H1 (cell line): ENCODE measurements at regions of chr11 and their contacts with region 1.

Region 1: DNA sequence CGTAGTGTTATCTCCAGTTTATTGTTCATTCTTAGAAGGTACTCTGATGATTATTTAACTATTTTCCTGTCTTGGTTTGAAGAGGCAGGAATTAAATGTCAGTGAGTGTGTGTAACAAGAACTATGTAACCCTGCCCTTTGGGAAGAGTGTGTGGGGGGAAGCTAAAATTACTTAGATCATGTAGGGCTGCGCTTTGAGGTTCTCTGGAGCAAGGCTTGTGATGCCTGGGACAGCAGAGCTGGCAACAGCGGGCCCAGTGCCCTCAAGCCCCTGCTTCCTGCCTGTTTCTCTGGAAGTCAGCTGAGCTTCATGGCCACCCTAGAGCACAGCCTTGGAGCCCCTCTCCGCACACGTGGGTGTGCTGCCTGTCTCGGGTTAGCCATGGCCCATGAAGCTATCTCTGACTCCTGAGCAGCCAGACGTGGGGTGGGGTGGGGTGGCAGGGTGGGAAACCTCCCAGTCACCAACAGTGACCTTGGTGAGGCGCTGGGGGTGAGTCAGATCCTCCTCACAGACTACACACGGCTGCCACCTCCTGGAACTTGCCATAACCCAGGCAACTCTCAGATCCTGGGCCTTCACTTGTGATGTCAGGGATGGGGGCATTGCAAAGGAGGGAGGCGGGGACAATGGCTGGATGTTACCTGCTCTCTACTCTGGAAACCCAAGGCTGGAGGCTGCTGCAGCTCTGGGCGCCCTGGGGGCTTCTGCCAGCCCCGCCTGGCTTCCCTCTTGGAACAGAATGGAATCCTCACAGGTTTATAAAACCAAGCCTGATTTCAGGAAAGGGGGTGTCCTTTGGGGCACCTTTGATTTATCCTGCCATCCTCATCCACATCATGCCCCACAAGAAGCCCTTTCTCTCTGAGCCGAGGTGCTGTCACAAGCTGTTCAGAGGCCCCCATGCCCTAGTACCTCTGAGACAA is 88.6 kb downstream of the SNX19 start:
- DNase-seq: peak; percentile 66 to 69
- H3K4me3 ChIP-seq: no peak overlapping the region
- H3K27ac ChIP-seq: no peak overlapping the region
- H3K4me1 ChIP-seq: peaks cover 0 to 10% (median 2%) of the 10 kb centered on the region in 4 experiments; a peak in 4 of 7 replicates
- H3K27me3 ChIP-seq: no peaks in the 10 kb centered on the region
- CTCF ChIP-seq: peak; percentile 73 to 85 (median 79)
- EP300 ChIP-seq: no peak
- POLR2A ChIP-seq: no peak
- RAD21 ChIP-seq: peak; percentile 91 to 93

Region 2: DNA sequence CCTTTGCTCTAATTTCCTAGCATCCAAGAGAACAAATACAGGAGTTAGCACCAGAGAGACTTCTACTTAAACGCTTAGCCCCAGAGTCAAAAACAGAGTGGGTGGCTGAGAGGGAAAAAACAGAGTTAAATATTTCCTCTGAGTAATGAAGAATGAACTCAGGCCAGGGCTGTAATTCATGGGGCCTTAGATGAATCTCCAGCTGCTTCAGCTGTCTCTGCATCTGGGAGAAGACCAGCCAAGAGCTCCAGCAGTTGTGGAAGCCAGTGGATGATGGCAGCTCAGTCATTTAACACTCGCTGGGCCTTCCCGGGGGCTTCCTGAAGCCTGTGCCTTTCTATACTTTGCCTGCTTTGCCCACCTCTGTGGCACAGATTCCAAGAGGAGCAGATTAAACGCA is 385.0 kb before region 1 on chr11:
- CTCF ChIA-PET with region 1: interaction called, 13 read pairs
- POLR2A ChIA-PET with region 1: no interaction called
- DNase-seq: no peak
- H3K4me3 ChIP-seq: no peak overlapping the region
- H3K27ac ChIP-seq: no peak overlapping the region
- H3K4me1 ChIP-seq: no peaks in the 10 kb centered on the region
- H3K27me3 ChIP-seq: peaks cover 0 to 12% (median 4%) of the 10 kb centered on the region in 4 experiments; a peak in 4 of 7 replicates
- CTCF ChIP-seq: no peak
- EP300 ChIP-seq: no peak
- POLR2A ChIP-seq: no peak
- RAD21 ChIP-seq: no peak

Region 3: DNA sequence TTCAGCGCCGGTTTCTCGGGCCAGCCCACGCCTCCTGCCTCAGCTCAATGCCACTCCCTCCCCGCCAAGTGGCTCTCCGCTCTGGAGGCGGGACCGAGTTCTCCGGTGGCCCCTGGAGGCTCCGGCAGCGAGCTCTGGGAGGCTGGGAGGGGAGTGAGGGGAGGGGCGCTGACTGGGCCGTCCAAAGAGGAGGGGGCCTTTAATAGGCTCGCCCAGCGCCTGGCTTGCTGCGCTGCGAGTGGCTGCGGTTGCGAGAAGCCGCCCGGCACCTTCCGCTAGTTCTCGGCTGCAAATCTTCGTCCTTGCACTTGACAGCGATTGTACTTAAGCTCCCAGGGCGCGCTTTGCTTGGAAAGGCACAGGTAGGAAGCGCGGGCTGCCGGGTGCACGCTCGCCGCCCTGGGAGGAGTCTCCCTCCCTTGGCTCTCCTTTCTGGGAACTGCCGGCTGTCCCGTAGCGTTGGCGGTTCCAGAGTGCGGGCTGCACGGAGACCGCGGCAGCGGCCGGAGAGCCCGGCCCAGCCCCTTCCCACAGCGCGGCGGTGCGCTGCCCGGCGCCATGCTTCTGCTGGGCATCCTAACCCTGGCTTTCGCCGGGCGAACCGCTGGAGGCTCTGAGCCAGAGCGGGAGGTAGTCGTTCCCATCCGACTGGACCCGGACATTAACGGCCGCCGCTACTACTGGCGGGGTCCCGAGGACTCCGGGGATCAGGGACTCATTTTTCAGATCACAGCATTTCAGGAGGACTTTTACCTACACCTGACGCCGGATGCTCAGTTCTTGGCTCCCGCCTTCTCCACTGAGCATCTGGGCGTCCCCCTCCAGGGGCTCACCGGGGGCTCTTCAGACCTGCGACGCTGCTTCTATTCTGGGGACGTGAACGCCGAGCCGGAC is 379.1 kb before region 1 on chr11 and contains the start of gene ADAMTS15:
- CTCF ChIA-PET with region 1: interaction called, 14 read pairs
- POLR2A ChIA-PET with region 1: no interaction called
- DNase-seq: peak; percentile 80 to 87
- H3K4me3 ChIP-seq: peak within 1 kb of the TSS; percentile 49 to 72 (median 54)
- H3K27ac ChIP-seq: no peak within 1 kb of the TSS
- H3K4me1 ChIP-seq: peaks cover 0 to 9% (median 6%) of the 10 kb centered on the region in 4 experiments; a peak in 6 of 7 replicates
- H3K27me3 ChIP-seq: peaks cover 9 to 63% (median 44%) of the 10 kb centered on the region in 4 experiments
- CTCF ChIP-seq: no peak; a peak in 1 of 4 replicates
- EP300 ChIP-seq: no peak
- POLR2A ChIP-seq: peak in 1 of 2 experiments; percentile 34; a peak in 1 of 3 replicates
- RAD21 ChIP-seq: no peak
- total RNA-seq, gene ADAMTS15: 4.7 and 4.9 TPM in 2 replicates

Region 4: DNA sequence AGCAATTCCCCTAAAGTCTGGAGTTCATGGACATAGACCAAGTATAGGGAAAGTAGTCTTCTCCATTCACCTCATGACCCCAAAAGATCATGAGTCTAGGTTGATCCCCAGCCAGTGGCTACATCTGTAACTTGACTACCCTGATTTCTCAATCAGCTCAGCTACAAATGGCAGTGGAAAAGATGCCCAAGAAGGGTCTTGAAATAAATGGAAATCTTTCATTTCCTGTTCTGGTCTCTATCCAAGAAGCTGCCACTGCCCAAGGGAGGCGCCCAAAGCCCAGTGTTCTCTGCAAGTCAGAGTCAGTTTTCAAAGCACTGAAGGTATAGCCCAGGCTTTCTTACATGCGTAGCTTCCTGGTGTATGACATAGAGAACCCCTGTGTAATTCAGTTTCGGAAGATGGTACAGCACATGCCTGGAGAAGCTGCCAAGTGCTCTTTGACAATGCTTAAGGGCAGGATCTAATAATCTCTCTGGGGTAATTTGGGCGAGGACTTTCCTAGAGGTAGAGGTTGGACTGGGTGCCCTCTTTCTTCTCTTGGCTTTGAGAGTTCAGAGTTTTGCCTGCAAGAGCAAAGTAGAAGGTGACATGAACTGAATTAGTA is 278.2 kb before region 1 on chr11:
- CTCF ChIA-PET with region 1: interaction called, 13 read pairs
- POLR2A ChIA-PET with region 1: no interaction called
- DNase-seq: no peak
- H3K4me3 ChIP-seq: no peak overlapping the region
- H3K27ac ChIP-seq: no peak overlapping the region
- H3K4me1 ChIP-seq: peaks cover 0 to 2% (median 0%) of the 10 kb centered on the region in 4 experiments; a peak in 1 of 7 replicates
- H3K27me3 ChIP-seq: no peaks in the 10 kb centered on the region; a peak in 1 of 7 replicates
- CTCF ChIP-seq: peak in 2 of 3 experiments; percentile 28 to 33; a peak in 2 of 4 replicates
- EP300 ChIP-seq: no peak
- POLR2A ChIP-seq: no peak
- RAD21 ChIP-seq: peak; percentile 50 to 66

Region 5: DNA sequence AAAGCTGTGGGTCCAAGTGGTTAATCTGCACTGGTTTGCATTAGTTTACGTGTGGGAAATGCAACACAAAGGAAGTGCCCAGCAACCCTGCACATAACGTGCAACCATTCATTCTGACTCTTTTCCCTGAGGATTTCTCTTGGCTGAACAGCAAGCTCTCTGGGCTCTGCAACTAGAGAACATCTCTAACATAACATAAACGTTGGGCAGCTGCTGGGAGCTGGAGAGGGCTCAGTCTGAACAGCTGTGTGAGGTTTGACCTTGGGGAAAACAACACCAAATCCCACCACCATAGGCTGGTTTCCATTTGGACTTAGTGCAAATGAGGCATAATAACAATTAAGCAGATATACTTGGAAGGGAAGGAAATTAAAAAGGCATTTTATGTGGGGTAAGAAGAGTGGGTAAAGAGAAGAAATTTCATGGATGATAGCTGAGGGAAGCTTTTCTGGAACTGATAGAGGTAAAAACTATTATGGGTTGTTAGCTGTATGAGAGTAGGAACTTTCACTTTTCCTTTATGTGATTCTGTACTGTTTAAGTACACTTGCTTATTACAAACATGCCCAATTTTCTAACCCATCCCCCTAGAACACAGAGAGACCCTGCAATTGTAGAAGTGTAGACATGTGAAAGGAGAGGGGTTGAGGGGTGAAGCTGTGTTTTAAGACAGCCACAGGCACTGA is 12.4 kb after region 1 on chr11:
- CTCF ChIA-PET with region 1: interaction called, 26 read pairs
- POLR2A ChIA-PET with region 1: no interaction called
- DNase-seq: no peak
- H3K4me3 ChIP-seq: no peak overlapping the region
- H3K27ac ChIP-seq: no peak overlapping the region
- H3K4me1 ChIP-seq: peaks cover 0 to 3% (median 0%) of the 10 kb centered on the region in 4 experiments; a peak in 2 of 7 replicates
- H3K27me3 ChIP-seq: no peaks in the 10 kb centered on the region; a peak in 1 of 7 replicates
- CTCF ChIP-seq: no peak
- EP300 ChIP-seq: no peak
- POLR2A ChIP-seq: no peak
- RAD21 ChIP-seq: no peak

Region 6: DNA sequence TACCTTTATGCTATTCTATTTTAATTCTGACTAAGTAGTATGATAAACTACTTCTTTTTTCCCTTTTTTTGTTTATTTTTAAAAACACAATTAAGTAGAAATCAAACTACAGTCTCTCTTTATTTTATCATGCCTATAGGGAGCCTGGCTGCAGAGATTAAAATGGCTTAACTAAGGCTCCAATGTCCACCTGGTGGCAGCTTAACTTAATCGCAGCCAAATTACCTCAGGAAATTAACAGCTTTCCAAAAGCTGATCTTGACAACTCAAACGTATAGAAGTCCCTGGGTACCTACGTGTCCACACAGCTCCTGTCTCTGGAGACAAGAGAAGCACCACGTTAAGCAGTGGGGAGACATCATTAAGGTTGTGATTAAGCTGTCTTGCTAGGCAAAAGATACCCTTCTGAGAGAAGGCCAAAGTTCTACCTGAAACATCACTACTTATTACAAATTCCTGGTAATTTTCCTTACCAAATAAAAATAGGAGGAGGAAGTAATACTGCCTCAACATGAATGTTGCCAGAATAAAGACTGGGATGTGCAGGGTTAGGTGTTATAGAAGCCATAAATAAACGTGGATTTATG is 151.8 kb after region 1 on chr11:
- CTCF ChIA-PET with region 1: no interaction called
- POLR2A ChIA-PET with region 1: no interaction called
- DNase-seq: no peak
- H3K4me3 ChIP-seq: no peak overlapping the region
- H3K27ac ChIP-seq: no peak overlapping the region
- H3K4me1 ChIP-seq: no peaks in the 10 kb centered on the region
- H3K27me3 ChIP-seq: no peaks in the 10 kb centered on the region
- CTCF ChIP-seq: peak in 2 of 3 experiments; percentile 58 to 69; a peak in 3 of 4 replicates
- EP300 ChIP-seq: no peak
- POLR2A ChIP-seq: no peak
- RAD21 ChIP-seq: peak; percentile 52 to 62

Region 7: DNA sequence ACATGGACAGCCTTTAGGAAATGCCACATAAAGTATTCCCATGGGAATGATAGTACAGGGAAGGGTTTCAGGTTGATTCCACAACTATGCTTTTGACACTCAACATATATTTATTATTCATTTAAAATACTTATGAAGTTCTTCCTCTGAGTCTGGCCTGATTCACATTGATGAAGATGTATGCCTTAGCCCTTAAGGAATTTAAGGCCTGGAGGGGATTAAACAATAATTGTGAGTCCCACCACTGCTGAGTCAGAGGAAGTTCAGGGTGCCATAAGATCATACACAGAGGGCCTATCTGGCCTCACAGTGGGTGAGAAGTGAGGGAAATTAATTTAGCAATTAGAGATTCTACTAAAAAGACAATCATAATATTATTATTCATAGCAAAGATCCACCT is 249.6 kb after region 1 on chr11:
- CTCF ChIA-PET with region 1: no interaction called
- POLR2A ChIA-PET with region 1: no interaction called
- DNase-seq: no peak
- H3K4me3 ChIP-seq: no peak overlapping the region
- H3K27ac ChIP-seq: no peak overlapping the region
- H3K4me1 ChIP-seq: no peaks in the 10 kb centered on the region
- H3K27me3 ChIP-seq: no peaks in the 10 kb centered on the region
- CTCF ChIP-seq: no peak
- EP300 ChIP-seq: no peak
- POLR2A ChIP-seq: no peak
- RAD21 ChIP-seq: no peak

Region 8: DNA sequence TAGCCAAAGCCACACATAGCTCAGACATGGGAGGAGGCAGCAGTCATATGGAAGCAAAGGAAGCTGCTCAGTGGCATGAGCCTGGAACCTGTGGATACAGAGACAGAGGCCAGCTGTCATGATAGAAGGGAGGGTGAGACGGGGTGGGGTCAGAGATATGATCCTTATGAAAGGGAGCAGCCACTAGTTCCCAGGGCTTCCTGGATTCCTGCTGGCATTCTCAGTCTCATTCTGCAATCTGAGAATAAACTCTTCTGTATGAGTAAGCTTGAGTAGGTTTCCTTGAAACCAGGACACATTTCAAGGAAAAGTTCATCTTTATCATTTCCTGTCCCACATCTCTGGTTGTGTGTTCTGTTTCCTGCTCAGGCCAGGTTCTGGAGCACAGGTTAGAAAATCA is 308.8 kb after region 1 on chr11:
- CTCF ChIA-PET with region 1: no interaction called
- POLR2A ChIA-PET with region 1: no interaction called
- DNase-seq: no peak
- H3K4me3 ChIP-seq: no peak overlapping the region
- H3K27ac ChIP-seq: no peak overlapping the region
- H3K4me1 ChIP-seq: no peaks in the 10 kb centered on the region; a peak in 1 of 7 replicates
- H3K27me3 ChIP-seq: 0 out of 7 replicates have a peak, but pooled peaks cover 0 to 2% (median 0%) of the 10 kb centered on the region in 4 experiments
- CTCF ChIP-seq: no peak
- EP300 ChIP-seq: no peak
- POLR2A ChIP-seq: no peak
- RAD21 ChIP-seq: no peak